Activated T-helper 1 cell treated with anti-CD3 and anti-CD28 coated beads, Interleukin-12 subunit alpha, Interleukin-12 subunit beta, Interleukin-2, Interleukin-4 antibody, amounts not matched to agents 30 ng/mL and 10 ng/mL and 1 ng/mL, durations not matched to agents 14 hours and 24 hours and 36 hours (primary cell): ENCODE measurements at regions of chr11 and their contacts with region 1.

Region 1: DNA sequence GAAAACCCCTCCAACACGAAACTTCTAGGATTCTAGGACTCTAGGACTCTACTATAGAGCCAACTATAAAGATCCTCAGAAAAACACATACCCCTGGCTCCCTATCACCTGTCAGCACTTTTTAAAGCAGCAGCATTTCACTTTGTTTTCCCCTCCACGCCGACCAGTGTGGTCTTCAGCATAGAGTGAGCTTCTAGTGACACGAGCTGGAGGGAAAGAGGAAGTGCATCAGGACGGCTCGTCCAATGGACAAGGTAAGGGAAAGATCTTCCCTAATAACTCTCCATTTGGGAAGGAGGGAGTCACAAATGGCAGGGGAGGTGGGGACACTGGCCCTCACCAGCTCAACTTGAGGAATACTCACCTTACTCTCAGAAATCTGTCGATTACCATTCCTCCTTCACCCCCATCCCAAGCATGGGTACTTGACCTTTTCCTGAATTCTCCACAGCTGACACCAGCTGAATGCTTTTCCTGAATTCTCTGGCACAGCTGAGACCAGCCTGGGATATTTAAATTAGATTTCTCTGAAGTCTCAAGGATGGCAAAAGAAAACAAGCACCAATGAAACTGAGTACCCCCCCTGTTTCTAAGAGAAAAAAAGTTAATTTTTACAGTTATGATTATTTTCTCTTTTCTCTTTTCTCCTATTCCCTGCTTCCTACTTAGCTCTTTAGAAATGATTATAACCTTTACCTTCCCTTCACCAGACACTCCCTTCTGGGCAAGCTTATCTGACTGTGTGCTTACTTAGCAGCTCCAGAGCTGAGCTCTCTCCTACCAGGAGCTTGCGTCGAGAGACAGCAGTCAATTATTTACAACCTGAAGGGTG is 33.3 kb upstream of the NNMT start:
- DNase-seq: no peak
- H3K4me3 Mint-ChIP-seq: no peak overlapping the region
- H3K27ac Mint-ChIP-seq: no peak overlapping the region
- H3K4me1 Mint-ChIP-seq: no peaks in the 10 kb centered on the region
- H3K27me3 Mint-ChIP-seq: no peaks in the 10 kb centered on the region

Region 2: GRCh38 chr11:113305440-113306336 is 957.2 kb before region 1 on chr11:
- intact Hi-C with region 1: loop called (anchors 10 kb)
- DNase-seq: peak; percentile 51
- H3K4me3 Mint-ChIP-seq: no peak overlapping the region
- H3K27ac Mint-ChIP-seq: no peak overlapping the region
- H3K4me1 Mint-ChIP-seq: no peaks in the 10 kb centered on the region
- H3K27me3 Mint-ChIP-seq: peaks cover 16% of the 10 kb centered on the region

Region 3: GRCh38 chr11:113806406-113806805 is 456.5 kb before region 1 on chr11:
- intact Hi-C with region 1: loop called (anchors 2 kb)
- DNase-seq: peak; percentile 8
- H3K4me3 Mint-ChIP-seq: no peak overlapping the region
- H3K27ac Mint-ChIP-seq: no peak overlapping the region
- H3K4me1 Mint-ChIP-seq: no peaks in the 10 kb centered on the region
- H3K27me3 Mint-ChIP-seq: no peaks in the 10 kb centered on the region

Region 4: GRCh38 chr11:113994077-113994954 is 268.6 kb before region 1 on chr11:
- intact Hi-C with region 1: loop called (anchors 1 kb)
- DNase-seq: no peak
- H3K4me3 Mint-ChIP-seq: no peak overlapping the region
- H3K27ac Mint-ChIP-seq: no peak overlapping the region
- H3K4me1 Mint-ChIP-seq: no peaks in the 10 kb centered on the region
- H3K27me3 Mint-ChIP-seq: peaks cover 7% of the 10 kb centered on the region

Region 5: DNA sequence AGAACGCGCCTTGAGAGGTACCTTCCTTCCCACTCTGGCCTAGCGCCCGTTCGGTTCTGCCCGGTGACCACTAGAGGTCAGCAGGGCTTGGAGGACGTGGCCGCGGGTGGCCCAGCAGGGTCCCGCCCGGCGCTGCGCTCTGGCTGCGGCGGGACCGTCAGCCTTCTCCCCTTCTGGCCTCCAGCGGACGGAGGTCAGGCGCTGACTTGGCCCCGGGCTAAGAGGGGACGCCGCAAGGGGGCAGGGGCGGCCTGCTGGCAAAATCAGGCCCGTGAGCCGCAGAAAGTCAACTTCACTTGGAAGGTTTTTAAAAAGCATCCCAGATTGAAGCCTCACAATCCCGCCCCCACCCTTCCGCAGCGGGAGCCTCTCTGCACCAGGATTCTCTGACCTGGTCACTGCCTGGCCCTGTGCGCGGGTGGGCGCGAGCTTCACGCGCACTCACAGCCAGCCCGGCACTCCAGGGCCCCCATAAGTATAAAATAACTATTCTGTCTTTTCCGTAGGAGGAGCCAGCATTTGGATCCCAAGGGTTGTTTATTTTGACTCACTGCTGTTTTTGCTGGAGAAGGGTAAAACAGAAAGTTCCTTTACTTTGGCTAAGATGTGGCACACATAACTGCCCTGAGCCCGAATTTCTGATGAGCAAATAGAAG is 226.6 kb before region 1 on chr11:
- intact Hi-C with region 1: loop called (anchors 1 kb)
- DNase-seq: peak; percentile 28
- H3K4me3 Mint-ChIP-seq: no peak overlapping the region
- H3K27ac Mint-ChIP-seq: no peak overlapping the region
- H3K4me1 Mint-ChIP-seq: no peaks in the 10 kb centered on the region
- H3K27me3 Mint-ChIP-seq: peaks cover 21% of the 10 kb centered on the region

Region 6: GRCh38 chr11:114059278-114059983 is 203.5 kb before region 1 on chr11 and contains the start of gene ZBTB16:
- intact Hi-C with region 1: loop called (anchors 2 kb)
- DNase-seq: no peak
- H3K4me3 Mint-ChIP-seq: peak within 1 kb of the TSS; percentile 83
- H3K27ac Mint-ChIP-seq: no peak within 1 kb of the TSS
- H3K4me1 Mint-ChIP-seq: no peaks in the 10 kb centered on the region
- H3K27me3 Mint-ChIP-seq: peaks cover 64% of the 10 kb centered on the region
- total RNA-seq, gene ZBTB16: 3.4 and 3.9 TPM in 2 replicates

Region 7: GRCh38 chr11:114208377-114208776 is 54.5 kb before region 1 on chr11:
- intact Hi-C with region 1: loop called (anchors 10 kb)
- DNase-seq: peak; percentile 19
- H3K4me3 Mint-ChIP-seq: no peak overlapping the region
- H3K27ac Mint-ChIP-seq: peak overlapping the region; percentile 25
- H3K4me1 Mint-ChIP-seq: peaks cover 39% of the 10 kb centered on the region
- H3K27me3 Mint-ChIP-seq: peaks cover 8% of the 10 kb centered on the region

Region 8: DNA sequence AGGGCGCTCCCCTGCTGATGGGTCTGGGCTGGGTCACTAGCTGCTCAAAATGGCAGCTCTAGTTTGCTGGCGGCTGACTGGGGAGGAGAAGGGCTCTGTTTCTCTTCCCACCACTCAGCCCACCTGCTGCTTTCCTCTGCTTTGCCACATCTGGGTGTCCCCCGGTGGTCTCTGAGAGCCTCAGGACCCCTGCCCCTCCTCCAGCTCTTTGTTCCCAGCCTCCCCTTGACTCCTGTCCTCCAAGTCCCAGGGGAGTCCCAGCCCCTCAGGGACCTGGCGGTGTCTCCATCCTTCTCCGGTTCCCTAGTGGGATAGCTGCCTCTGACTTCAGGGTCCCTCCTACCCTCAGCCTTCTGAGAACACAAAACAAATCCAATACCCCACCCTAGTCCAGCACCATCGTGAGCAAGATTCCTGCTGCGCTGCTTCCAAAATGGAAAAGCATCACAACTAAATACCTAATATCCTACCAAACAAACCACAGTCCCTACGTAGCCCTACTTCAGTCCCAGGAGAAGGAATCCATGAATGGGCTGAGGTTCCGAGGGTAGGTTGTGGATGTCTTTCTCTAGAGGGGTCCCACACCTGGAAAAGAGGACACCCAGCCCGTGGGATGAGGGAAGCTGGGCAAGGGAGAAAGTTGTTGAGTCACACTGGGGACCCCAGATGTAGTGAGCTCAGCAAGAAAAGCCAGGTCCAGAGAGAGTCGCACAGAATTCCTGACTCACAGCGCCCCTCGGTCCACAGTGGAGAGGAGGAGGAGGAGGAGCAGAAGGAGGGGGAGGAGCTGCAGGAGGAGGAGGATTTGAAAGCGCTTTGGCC is 11.7 kb before region 1 on chr11:
- intact Hi-C with region 1: no loop called
- DNase-seq: no peak
- H3K4me3 Mint-ChIP-seq: no peak overlapping the region
- H3K27ac Mint-ChIP-seq: no peak overlapping the region
- H3K4me1 Mint-ChIP-seq: no peaks in the 10 kb centered on the region
- H3K27me3 Mint-ChIP-seq: peaks cover 5% of the 10 kb centered on the region

Region 9: GRCh38 chr11:114280696-114281095 is 17.8 kb after region 1 on chr11:
- intact Hi-C with region 1: no loop called
- DNase-seq: no peak
- H3K4me3 Mint-ChIP-seq: no peak overlapping the region
- H3K27ac Mint-ChIP-seq: no peak overlapping the region
- H3K4me1 Mint-ChIP-seq: no peaks in the 10 kb centered on the region
- H3K27me3 Mint-ChIP-seq: peaks cover 7% of the 10 kb centered on the region